ENCODE measurements at regions of chr7 and their contacts with region 1.

Region 1: DNA sequence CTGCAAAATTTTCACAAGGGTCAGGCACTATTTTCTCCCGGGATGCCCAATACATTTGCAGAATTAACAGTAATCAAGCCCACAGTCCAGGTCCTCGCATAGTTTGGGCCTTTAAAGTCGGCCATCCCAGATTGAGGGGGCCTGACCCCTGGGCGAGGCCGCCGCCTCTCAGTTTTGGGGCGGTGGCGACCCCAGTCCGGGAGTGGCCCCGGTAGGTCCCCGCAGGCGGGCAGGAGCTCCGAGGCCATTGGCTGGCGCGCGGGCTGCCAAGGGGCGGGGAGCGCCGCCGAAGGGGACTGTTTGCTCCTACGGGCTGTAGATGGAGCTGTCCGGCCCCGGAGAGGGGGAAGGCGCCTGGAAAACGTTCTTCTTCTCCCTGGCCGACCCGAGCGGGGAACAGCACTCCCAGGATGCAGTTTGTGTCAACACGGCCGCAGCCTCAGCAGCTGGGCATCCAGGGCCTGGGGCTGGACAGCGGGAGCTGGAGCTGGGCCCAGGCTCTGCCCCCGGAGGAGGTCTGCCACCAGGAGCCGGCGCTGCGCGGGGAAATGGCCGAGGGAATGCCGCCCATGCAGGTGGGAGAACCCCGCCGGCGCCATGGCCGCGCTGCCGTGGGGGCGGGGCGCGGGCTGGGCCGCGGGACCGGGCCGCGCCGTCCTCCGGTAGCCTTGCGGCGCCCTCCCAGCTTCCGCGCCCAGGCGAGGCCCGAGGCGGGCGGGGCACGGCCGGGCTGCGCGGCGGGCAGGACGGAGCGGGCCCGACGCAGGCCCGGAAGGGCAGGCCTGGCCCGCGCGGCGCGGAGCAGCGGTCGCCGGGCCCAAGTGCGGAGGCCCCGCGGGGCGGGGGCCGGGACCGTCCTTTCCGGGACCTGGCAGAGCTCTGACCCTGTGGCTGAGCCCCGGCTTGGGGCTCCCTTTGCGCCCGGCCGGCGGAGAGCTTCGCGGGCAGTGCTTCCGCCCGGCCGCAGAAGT is at the start of gene ZNF282:
- DNase-seq: peak; percentile 95
- ATAC-seq: peak; percentile 96
- H3K4me3 Mint-ChIP-seq: peak within 1 kb of the TSS; percentile 88
- H3K27ac Mint-ChIP-seq: peak within 1 kb of the TSS; percentile 87
- H3K4me1 Mint-ChIP-seq: peaks cover 13% of the 10 kb centered on the region
- H3K27me3 Mint-ChIP-seq: no peaks in the 10 kb centered on the region
- CTCF ChIP-seq: no peak
- total RNA-seq, gene ZNF282: 34.8 to 39.3 TPM (median 38.5 TPM) in 3 replicates

Region 2: GRCh38 chr7:149147072-149147751 is 48.3 kb before region 1 on chr7 and contains the start of gene ZNF398:
- CTCF ChIA-PET with region 1: interaction called, 21 read pairs
- POLR2A ChIA-PET with region 1: interaction called, 9 read pairs
- DNase-seq: peak; percentile 65
- ATAC-seq: peak; percentile 34
- H3K4me3 Mint-ChIP-seq: peak within 1 kb of the TSS; percentile 91
- H3K27ac Mint-ChIP-seq: peak within 1 kb of the TSS; percentile 99
- H3K4me1 Mint-ChIP-seq: peaks cover 62% of the 10 kb centered on the region
- H3K27me3 Mint-ChIP-seq: no peaks in the 10 kb centered on the region
- CTCF ChIP-seq: peak; percentile 88
- total RNA-seq, gene ZNF398: 57.8 to 63.2 TPM (median 58.9 TPM) in 3 replicates

Region 3: DNA sequence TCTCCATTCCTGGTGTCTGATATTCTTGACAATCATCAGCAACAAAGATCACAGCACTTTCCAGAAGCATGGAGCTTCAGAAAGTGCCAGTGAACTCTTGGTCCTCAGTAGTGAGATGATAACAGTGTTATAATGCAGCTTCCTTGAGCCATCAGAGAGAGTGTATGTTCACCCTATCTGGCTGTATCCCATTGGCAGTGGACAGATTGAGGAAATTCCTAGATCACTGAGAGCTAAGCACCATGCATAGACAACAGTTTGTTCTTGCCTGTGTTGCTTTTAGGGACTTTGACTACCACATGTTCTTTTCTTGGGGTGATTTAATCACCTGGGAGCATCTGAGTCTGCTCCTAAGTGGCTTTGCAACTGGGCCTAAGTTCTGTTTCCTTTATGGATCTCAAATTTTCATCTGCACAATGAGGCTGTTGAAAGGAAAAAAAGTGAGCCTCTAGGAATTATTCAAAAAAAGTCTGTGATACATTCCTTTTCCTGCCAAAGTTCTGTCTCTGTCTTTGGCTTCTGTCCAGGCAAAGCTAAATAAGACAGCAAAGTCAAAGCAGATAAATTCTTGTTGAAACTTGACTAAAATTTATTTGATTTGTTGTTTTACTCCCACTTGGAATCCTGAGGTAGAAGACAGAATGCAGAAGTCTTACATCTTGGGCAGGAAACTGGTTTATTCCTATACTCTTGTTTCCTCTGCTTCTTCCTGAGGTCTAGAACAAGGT is 14.6 kb before region 1 on chr7:
- CTCF ChIA-PET with region 1: interaction called, 16 read pairs
- POLR2A ChIA-PET with region 1: interaction called, 13 read pairs
- DNase-seq: no peak
- ATAC-seq: no peak
- H3K4me3 Mint-ChIP-seq: no peak overlapping the region
- H3K27ac Mint-ChIP-seq: peak overlapping the region; percentile 93
- H3K4me1 Mint-ChIP-seq: no peaks in the 10 kb centered on the region
- H3K27me3 Mint-ChIP-seq: no peaks in the 10 kb centered on the region
- CTCF ChIP-seq: no peak